ENCODE measurements at regions of chr2 and their contacts with region 1.

Region 1: DNA sequence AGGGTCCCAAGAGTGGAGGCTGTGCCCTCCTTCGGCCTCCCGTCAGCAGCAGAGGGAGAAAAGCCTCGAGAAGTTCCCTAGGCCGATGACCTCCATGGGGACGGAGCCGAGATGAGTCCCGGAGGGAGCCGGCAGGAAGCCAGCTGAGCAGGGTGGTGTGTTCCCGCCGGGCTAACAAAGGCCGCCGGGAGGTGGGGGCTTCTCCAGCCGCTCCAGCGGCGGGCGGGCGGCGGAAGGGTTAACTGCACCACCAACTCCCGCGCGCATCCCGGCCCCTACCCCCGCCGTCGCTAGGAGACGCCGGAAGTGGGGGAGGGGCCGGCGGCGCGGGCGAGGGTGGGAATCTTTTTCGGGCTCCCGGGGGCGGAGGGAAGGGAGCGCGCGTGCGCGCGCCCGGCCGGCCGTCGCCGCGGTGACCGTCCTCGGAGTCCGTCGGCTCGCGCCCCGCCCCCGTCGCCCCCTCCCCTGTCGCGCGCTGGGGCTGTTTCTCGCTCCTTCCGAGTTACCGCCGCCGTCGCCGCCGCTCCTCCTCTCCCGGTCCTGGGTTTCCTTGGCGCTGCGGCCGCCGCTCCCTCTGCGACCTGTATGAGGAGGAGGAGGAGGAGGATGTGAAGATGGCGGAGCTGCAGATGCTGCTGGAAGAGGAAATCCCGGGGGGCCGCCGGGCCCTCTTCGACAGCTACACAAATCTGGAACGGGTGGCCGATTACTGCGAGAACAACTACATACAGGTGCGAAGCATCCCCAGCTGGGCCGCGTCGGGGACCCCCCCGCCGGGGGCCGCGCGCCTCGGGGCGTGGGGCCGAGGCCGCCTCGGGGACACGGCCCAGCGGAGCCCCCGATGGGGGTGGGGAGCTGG is at the start of gene ABI2:
- DNase-seq: peak; percentile 90 to 91
- ATAC-seq: peak; percentile 95 to 98 (median 97)
- H3K4me3 ChIP-seq: peak within 1 kb of the TSS; percentile 71 to 100 (median 94)
- H3K27ac ChIP-seq: peak within 1 kb of the TSS; percentile 57 to 95 (median 88)
- H3K4me1 ChIP-seq: peaks cover 0 to 38% (median 21%) of the 10 kb centered on the region in 9 donors
- H3K27me3 ChIP-seq: no peaks in the 10 kb centered on the region
- CTCF ChIP-seq: peak in 1 of 9 donors; percentile 8
- total RNA-seq, gene ABI2: 41.6 to 76.8 (median 57.7) TPM

Region 2: GRCh38 chr2:203143391-203143790 is 184.7 kb before region 1 on chr2:
- intact Hi-C with region 1: no loop called
- DNase-seq: no peak
- ATAC-seq: no peak
- H3K4me3 ChIP-seq: no peak overlapping the region
- H3K27ac ChIP-seq: no peak overlapping the region
- H3K4me1 ChIP-seq: no peaks in the 10 kb centered on the region
- H3K27me3 ChIP-seq: no peaks in the 10 kb centered on the region
- CTCF ChIP-seq: no peak

Region 3: GRCh38 chr2:203185864-203186263 is 142.3 kb before region 1 on chr2:
- intact Hi-C with region 1: no loop called
- DNase-seq: no peak
- ATAC-seq: no peak
- H3K4me3 ChIP-seq: no peak overlapping the region
- H3K27ac ChIP-seq: no peak overlapping the region
- H3K4me1 ChIP-seq: no peaks in the 10 kb centered on the region
- H3K27me3 ChIP-seq: no peaks in the 10 kb centered on the region
- CTCF ChIP-seq: no peak

Region 4: DNA sequence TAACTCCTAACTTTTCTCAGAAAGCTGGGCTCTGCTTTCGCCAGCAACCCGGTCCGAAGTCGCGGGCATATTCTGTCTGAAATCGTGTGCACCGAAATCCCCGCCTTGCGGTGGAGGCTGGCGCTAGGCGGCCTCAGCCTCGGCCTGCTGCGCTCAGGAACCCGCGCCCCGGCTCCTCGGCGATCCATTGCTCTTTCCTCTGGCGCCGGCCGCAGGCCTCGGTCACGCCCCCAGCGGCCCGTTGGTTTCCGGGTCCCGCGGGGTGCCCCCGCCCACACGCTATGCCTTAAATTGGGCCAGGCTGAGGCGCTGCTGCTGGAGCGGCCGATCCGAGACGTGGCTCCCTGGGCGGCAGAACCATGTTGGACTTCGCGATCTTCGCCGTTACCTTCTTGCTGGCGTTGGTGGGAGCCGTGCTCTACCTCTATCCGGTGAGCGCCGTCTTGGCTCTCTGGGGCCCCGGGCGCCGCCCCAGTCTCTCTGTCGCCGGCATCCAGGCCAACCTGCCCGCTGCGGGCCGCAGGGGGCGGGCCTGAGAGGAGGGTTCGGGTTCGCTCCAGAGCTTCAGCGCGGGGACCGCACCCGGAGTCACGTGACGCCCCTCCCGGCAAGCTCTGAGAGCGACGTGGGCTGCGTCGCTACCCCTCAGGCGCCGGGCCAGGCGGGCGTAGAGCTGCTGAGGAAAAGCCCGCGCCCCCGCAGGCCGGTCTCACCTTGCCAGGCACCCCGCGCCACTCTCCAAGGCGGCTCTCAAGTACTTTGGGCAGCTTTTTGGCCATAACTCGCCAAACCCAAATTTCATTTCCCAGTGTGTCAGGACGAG is 89.2 kb before region 1 on chr2 and contains the start of gene CYP20A1:
- intact Hi-C with region 1: loop called in 1 of 10 experiments (anchors 5 kb)
- DNase-seq: peak; percentile 96 to 97
- ATAC-seq: peak; percentile 97 to 99 (median 98)
- H3K4me3 ChIP-seq: peak within 1 kb of the TSS; percentile 51 to 95 (median 77)
- H3K27ac ChIP-seq: peak within 1 kb of the TSS; percentile 67 to 98 (median 96)
- H3K4me1 ChIP-seq: peaks cover 0 to 27% (median 16%) of the 10 kb centered on the region in 9 donors
- H3K27me3 ChIP-seq: no peaks in the 10 kb centered on the region
- CTCF ChIP-seq: peak in 7 of 9 donors; percentile 24 to 63 (median 48)
- total RNA-seq, gene CYP20A1: 8.9 to 15.4 (median 10.9) TPM

Region 5: GRCh38 chr2:203310688-203311448 is 17.3 kb before region 1 on chr2:
- intact Hi-C with region 1: no loop called
- DNase-seq: no peak
- ATAC-seq: no peak
- H3K4me3 ChIP-seq: no peak overlapping the region
- H3K27ac ChIP-seq: no peak overlapping the region
- H3K4me1 ChIP-seq: no peaks in the 10 kb centered on the region
- H3K27me3 ChIP-seq: no peaks in the 10 kb centered on the region
- CTCF ChIP-seq: no peak

Region 6: GRCh38 chr2:203396667-203397066 is 68.5 kb after region 1 on chr2:
- intact Hi-C with region 1: loop called in 1 of 10 experiments (anchors 5 kb)
- DNase-seq: no peak
- ATAC-seq: peak in 2 of 8 donors; percentile 33 to 42
- H3K4me3 ChIP-seq: no peak overlapping the region
- H3K27ac ChIP-seq: no peak overlapping the region
- H3K4me1 ChIP-seq: peaks cover 0 to 7% (median 0%) of the 10 kb centered on the region in 9 donors
- H3K27me3 ChIP-seq: no peaks in the 10 kb centered on the region
- CTCF ChIP-seq: peak in 7 of 9 donors; percentile 14 to 43 (median 28)

Measured in heart right ventricle (tissue), 16 donors.